Naive thymus-derived CD4-positive, alpha-beta T cell (primary cell): ENCODE measurements at regions of chr3 and their contacts with region 1.

Region 1: DNA sequence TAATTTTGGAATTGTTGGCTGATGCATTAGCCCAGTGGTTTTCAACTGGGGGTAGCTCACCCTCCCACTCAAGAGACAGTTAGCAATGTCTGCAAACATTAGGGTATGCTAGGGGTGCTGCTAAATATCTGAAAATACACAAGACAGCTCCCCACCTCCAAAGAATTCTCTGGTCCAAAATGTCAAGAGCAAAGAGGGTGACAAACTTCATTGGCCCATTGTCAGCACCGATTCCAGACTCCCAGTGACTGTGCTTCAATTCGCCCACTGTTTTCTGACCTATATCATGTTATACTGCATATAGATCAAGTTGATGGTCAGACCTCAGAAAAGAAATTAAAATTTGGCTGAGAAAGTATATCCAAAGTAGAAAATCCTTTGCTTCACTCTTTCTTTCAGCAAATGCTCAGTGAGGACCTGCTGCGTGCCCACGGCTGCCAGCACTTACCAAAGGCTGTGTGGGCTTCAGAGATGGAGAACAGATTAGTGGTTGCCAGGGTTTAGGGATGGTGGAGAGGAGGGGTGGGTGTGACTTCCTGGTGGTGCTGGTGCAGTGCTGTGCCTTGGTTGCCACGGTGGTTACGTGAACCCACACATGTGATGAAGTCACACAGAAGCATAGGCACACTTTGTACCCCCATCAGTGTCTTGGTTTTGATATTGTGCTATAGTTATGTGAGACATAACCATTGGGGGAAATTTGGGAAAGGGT is 204.0 kb downstream of the PLCL2 start:
- DNase-seq: peak in 1 of 9 donors; percentile 29
- ATAC-seq: peak; percentile 81
- H3K4me3 ChIP-seq: no peak overlapping the region
- H3K4me3 Mint-ChIP-seq: peak overlapping the region in 4 of 10 donors; percentile 8 to 45 (median 30)
- H3K27ac ChIP-seq: no peak overlapping the region
- H3K27ac Mint-ChIP-seq: peak overlapping the region; percentile 52 to 90 (median 78)
- H3K4me1 ChIP-seq: peaks cover 6 to 32% of the 10 kb centered on the region in 2 donors
- H3K4me1 Mint-ChIP-seq: peaks cover 16 to 47% (median 38%) of the 10 kb centered on the region in 7 donors
- H3K27me3 ChIP-seq: no peaks in the 10 kb centered on the region
- H3K27me3 Mint-ChIP-seq: no peaks in the 10 kb centered on the region

Region 2: DNA sequence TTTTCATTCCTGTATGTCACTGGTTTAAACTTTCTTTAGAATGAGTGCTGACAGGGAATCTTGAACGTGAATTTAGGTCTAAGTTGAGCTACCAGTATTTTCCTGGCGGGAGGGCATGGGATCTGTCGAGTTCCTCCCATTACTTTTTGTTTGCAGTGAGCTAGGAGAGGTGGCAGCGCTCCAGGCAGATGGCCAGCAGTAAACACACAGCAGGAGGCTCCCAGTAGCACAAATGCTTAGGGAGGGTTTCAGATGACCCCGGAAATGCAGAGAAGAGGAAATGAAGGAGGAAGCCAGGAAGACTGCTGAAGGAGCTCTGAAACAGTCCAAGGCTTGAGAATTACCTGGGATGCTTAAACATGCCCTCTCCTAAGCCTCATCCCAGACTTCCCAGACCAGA is 18.2 kb before region 1 on chr3:
- CTCF ChIA-PET with region 1: no interaction called
- POLR2A ChIA-PET with region 1: no interaction called
- intact Hi-C with region 1: loop called in 1 of 2 experiments (anchors 2 kb)
- DNase-seq: no peak
- ATAC-seq: no peak
- H3K4me3 ChIP-seq: no peak overlapping the region
- H3K4me3 Mint-ChIP-seq: no peak overlapping the region
- H3K27ac ChIP-seq: no peak overlapping the region
- H3K27ac Mint-ChIP-seq: peak overlapping the region in 3 of 9 donors; percentile 20 to 83 (median 32)
- H3K4me1 ChIP-seq: peaks cover 20 to 21% of the 10 kb centered on the region in 2 donors
- H3K4me1 Mint-ChIP-seq: peaks cover 39 to 70% (median 60%) of the 10 kb centered on the region in 7 donors
- H3K27me3 ChIP-seq: no peaks in the 10 kb centered on the region
- H3K27me3 Mint-ChIP-seq: no peaks in the 10 kb centered on the region